ENCODE measurements at regions of chr18 and their contacts with region 1.

Region 1: GRCh38 chr18:34723143-34723542 is 13.0 kb downstream of the DTNA start:
- DNase-seq: no peak
- H3K4me3 Mint-ChIP-seq: no peak overlapping the region
- H3K27ac Mint-ChIP-seq: no peak overlapping the region
- H3K4me1 Mint-ChIP-seq: no peaks in the 10 kb centered on the region
- H3K27me3 Mint-ChIP-seq: peaks cover 9% of the 10 kb centered on the region

Region 2: DNA sequence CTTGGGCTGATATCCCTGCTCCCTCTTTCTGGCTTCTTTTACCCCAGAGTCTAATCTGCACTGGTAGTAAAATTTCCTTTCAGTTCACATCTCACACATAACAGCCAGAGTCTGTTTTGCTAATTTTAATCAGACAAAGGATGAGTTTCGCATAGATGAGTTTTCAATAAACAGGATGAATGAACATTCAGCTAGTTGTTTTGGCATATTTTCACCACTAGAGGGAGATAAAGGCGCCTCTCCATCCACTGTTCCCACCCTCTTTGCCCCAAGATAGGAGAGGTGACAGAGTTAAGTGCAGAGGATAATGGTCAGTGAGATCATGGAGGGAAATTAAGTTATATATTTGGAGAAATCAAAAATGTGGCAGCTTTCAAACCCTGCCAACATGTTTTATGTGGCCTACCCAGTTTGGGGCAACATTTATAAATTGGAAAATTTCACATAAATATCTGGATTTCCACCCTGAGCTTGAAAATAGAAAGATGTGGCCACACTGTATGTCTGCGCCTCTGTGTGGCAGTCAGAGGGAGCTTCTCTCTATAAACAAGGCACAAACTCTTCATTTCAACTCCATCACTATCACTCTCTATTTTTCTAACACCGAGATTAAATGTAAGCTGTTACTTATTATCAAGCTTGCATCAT is 61.6 kb before region 1 on chr18:
- CTCF ChIA-PET with region 1: interaction called, 8 read pairs
- intact Hi-C with region 1: loop called (anchors 5 kb)
- DNase-seq: no peak
- H3K4me3 Mint-ChIP-seq: no peak overlapping the region
- H3K27ac Mint-ChIP-seq: no peak overlapping the region
- H3K4me1 Mint-ChIP-seq: no peaks in the 10 kb centered on the region
- H3K27me3 Mint-ChIP-seq: peaks cover 16% of the 10 kb centered on the region